ENCODE measurements at regions of chr15 and their contacts with region 1.

Region 1: GRCh38 chr15:36591536-36592411 is 12.3 kb downstream of the CDIN1 start:
- DNase-seq: no peak

Region 2: DNA sequence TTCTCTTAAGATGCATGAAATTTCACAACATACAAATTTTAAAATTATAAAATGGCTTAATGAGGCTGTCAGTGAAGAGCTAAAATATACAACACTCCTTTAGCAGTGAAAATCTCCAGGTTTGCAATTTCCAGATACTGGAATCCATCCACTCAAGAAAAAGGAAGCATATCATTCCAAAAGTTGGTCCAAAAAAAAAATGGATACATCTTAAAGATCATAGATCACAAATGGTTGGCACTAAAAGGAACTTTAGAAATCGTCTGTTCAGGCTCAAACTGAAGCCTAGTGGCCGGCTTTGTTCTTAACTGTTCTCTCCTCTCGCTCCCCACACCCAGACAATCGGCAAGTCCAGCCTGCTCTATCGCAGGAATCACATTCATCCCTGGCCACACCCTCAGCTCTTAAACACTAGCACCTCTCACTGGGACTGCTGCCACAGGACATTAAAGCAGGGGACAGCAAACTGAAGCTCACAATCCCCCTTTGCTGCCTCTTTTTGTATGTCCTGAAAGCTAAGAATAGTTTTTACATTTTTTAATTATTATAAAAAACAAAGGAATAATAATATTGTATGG is 142.6 kb before region 1 on chr15:
- CTCF ChIA-PET with region 1: no interaction called
- POLR2A ChIA-PET with region 1: no interaction called
- DNase-seq: peak; percentile 21

Region 3: DNA sequence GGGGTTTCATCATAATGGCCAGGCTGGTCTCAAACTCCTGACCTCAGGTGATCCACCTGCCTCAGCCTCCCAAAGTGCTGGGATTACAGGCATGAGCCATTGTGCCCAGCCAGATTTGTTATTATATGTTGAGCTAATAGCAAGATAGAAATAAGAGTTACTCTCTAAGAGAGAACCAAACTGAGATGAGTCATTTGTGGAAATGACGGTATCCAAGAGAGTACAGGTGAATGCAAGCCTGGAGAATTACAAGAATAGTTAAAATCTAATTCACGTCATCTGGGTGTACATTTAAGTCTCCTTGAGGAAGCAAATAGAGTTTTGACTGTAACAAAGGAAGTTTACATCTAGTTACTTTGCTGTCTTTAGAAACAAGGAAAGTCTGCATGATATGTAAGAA is 24.3 kb before region 1 on chr15:
- CTCF ChIA-PET with region 1: no interaction called
- POLR2A ChIA-PET with region 1: no interaction called
- DNase-seq: no peak

Region 4: DNA sequence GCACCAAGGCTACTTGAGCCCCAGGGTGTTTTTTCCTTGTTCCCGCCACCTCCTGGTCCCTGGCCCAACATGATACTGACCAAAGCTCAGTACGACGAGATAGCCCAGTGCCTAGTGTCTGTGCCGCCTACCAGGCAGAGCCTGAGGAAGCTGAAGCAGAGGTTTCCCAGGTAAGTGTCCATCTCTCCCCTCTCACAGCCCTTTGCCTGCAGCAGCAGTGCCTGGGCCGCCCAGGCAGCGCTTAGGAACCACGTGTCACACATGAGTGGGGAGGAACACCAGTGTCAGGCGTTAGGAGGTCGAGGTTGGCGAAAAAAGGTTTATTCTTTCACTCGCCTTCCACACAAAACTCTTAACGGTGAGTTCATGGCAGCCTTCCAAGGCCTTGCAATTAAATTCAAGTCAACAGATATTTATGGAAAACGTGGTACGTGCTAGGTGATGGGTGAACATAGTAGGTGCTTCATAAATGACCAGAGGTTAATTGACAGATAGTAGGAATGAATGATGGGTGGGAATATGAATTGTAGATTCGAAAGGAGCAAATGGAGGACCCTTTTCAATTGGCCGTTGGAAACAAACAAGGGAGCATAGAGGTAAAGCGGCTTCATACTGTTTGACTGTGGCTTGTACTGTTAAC is 11.9 kb before region 1 on chr15:
- CTCF ChIA-PET with region 1: interaction called, 3 read pairs
- POLR2A ChIA-PET with region 1: interaction called, 13 read pairs
- DNase-seq: no peak

Measured in HEK293T (cell line).